Astrocyte of the cerebellum (primary cell): ENCODE measurements at regions of chr18 and their contacts with region 1.

Region 1: GRCh38 chr18:58781627-58782194 is 83.0 kb upstream of the ZNF532 start:
- DNase-seq: peak; percentile 64
- H3K4me3 ChIP-seq: no peak overlapping the region
- CTCF ChIP-seq: peak; percentile 82

Region 2: DNA sequence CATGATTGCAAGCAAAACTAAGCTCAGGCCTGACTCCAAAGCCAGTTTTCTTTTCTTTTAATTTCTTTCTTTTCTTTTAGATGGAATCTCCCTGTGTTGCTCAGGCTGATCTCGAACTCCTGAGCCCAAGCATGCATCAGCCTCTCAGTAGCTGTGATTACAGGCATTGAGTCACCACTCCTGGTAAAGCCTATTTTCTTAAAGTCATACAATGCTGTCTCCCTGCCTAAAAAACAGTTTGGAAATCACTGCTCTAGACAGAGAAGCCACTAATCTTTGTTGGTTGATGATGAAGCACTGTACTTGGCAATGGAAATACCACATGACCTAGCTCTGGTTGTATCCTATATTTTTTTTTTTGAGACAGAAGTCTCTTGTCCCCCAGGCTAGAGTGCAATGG is 49.9 kb after region 1 on chr18:
- in situ Hi-C with region 1: no loop called
- DNase-seq: no peak
- H3K4me3 ChIP-seq: no peak overlapping the region
- CTCF ChIP-seq: no peak

Region 3: GRCh38 chr18:58896268-58896667 is 114.6 kb after region 1 on chr18:
- in situ Hi-C with region 1: loop called (anchors 10 kb)
- DNase-seq: no peak
- H3K4me3 ChIP-seq: no peak overlapping the region
- CTCF ChIP-seq: no peak